Tibial artery (tissue), 4 donors: ENCODE measurements at regions of chr12 and their contacts with region 1.

Region 1: GRCh38 chr12:4037747-4038312 is 164.6 kb upstream of the PARP11 start:
- DNase-seq: peak in 1 of 2 donors; percentile 48
- H3K4me3 ChIP-seq: no peak overlapping the region
- H3K27ac ChIP-seq: no peak overlapping the region
- H3K4me1 ChIP-seq: no peaks in the 10 kb centered on the region
- H3K27me3 ChIP-seq: no peaks in the 10 kb centered on the region
- CTCF ChIP-seq: peak; percentile 74 to 82

Region 2: GRCh38 chr12:3885277-3886094 is 152.3 kb before region 1 on chr12:
- intact Hi-C with region 1: loop called (anchors 5 kb)
- DNase-seq: peak in 1 of 2 donors; percentile 24
- H3K4me3 ChIP-seq: peak overlapping the region; percentile 35 to 51
- H3K27ac ChIP-seq: peak overlapping the region; percentile 65 to 68
- H3K4me1 ChIP-seq: no peaks in the 10 kb centered on the region
- H3K27me3 ChIP-seq: peaks cover 0 to 10% of the 10 kb centered on the region in 2 donors
- CTCF ChIP-seq: peak; percentile 78 to 90

Region 3: DNA sequence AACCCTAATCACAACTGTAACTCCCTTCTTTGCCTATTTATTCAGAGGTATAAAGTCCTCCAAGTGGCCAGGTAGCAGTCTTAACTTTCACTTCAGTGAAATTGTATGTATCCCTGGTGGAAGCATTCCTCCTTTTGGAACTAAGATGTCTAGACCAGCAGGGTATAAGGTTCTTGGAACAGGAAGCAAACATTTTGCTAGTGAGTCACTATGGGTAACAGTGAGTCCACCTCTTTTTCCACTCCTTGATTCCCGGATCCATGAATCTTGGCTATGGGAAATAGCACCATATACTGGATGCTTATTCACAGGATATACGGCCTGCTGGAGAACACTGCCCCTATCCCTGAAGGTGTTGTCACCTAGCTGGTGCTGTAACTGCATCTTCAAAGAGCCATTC is 1086.1 kb after region 1 on chr12:
- intact Hi-C with region 1: no loop called
- DNase-seq: no peak
- H3K4me3 ChIP-seq: no peak overlapping the region
- H3K27ac ChIP-seq: no peak overlapping the region
- H3K4me1 ChIP-seq: no peaks in the 10 kb centered on the region
- H3K27me3 ChIP-seq: no peaks in the 10 kb centered on the region
- CTCF ChIP-seq: no peak